ENCODE measurements at regions of chr2 and their contacts with region 1.

Region 1: GRCh38 chr2:27071277-27071989 is at the start of gene OST4:
- DNase-seq: peak; percentile 80 to 90 (median 88)
- ATAC-seq: peak; percentile 87 to 91
- H3K4me3 Mint-ChIP-seq: peak within 1 kb of the TSS; percentile 93 to 98 (median 98)
- H3K27ac Mint-ChIP-seq: peak within 1 kb of the TSS; percentile 94 to 99 (median 97)
- H3K4me1 Mint-ChIP-seq: peaks cover 45 to 83% (median 76%) of the 10 kb centered on the region in 4 donors
- H3K27me3 Mint-ChIP-seq: no peaks in the 10 kb centered on the region
- polyA plus RNA-seq, gene OST4: 827 to 916 (median 901) TPM

Region 2: GRCh38 chr2:27086090-27086723 is 14.8 kb after region 1 on chr2:
- POLR2A ChIA-PET with region 1: interaction called, 197 read pairs
- DNase-seq: peak; percentile 95 to 99 (median 99)
- ATAC-seq: peak; percentile 90 to 91
- H3K4me3 Mint-ChIP-seq: peak overlapping the region; percentile 79 to 89 (median 85)
- H3K27ac Mint-ChIP-seq: peak overlapping the region in 8 of 10 donors; percentile 70 to 93 (median 86)
- H3K4me1 Mint-ChIP-seq: peaks cover 12 to 30% (median 24%) of the 10 kb centered on the region in 4 donors
- H3K27me3 Mint-ChIP-seq: no peaks in the 10 kb centered on the region

Measured in naive thymus-derived CD8-positive, alpha-beta T cell (primary cell).